WTC11 (cell line): ENCODE measurements at regions of chr22 and their contacts with region 1.

Region 1: GRCh38 chr22:30667494-30668385 is at the start of gene DUSP18:
- DNase-seq: peak; percentile 98
- ATAC-seq: peak; percentile 98
- H3K4me3 Mint-ChIP-seq: peak within 1 kb of the TSS; percentile 84
- H3K27ac Mint-ChIP-seq: peak within 1 kb of the TSS; percentile 52; the same call in 1 of the 2 replicates
- H3K4me1 Mint-ChIP-seq: peaks cover 12% of the 10 kb centered on the region
- H3K27me3 Mint-ChIP-seq: peaks cover 36% of the 10 kb centered on the region
- CTCF ChIP-seq: peak; percentile 37; the same call in 1 of the 2 replicates
- total RNA-seq, gene DUSP18: 4.2 to 4.4 TPM (median 4.3 TPM) in 3 replicates

Region 2: GRCh38 chr22:30680991-30681770 is 13.4 kb after region 1 on chr22:
- CTCF ChIA-PET with region 1: interaction called, 10 read pairs
- POLR2A ChIA-PET with region 1: no interaction called
- DNase-seq: no peak
- ATAC-seq: no peak
- H3K4me3 Mint-ChIP-seq: no peak overlapping the region
- H3K27ac Mint-ChIP-seq: no peak overlapping the region
- H3K4me1 Mint-ChIP-seq: peaks cover 25% of the 10 kb centered on the region
- H3K27me3 Mint-ChIP-seq: peaks cover under 1% of the 10 kb centered on the region; the same call in 1 of the 2 replicates
- CTCF ChIP-seq: no peak